ENCODE measurements at regions of chr19 and their contacts with region 1.

Region 1: DNA sequence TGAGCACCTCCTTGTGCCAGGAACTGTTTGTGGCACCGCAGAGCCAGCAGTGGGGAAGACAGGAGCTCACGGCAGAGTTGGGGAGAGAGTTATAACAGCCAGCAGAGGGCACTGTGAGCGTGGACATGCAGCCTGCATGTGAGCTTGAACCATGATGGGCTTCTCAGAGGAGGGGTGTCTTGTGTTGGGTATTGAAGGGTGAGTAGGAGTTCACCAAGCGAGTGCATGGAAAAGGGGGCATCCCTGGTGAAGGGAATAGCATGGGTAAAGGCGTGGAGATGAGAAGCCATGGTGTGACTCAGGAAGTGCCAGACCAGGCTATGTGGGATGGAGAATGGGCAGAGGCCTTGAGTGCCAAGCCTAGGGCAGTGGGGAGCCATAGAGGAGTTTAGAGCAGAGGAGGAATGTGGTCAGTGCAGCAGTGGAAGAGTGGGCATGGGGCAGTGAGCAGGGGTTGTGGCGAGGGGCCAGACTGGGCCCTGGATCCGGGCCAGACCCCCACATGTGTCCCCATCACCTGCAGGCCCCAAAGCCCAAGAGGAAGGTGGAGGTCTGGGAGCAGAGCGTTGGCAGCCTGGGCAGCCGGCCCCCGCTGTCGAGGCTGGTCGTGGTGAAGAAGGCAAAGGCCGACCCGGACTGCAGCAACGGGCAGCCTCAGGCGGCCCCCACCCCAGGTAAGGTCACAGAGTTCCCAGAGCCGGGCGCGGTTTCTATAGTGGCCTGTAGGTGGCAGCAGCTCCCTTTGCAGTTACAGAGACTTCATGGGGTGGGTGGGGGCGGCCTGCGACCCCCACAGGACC is 11.8 kb upstream of the SHD start:
- DNase-seq: peak; percentile 75
- H3K4me3 ChIP-seq: no peak overlapping the region
- H3K27ac ChIP-seq: no peak overlapping the region
- H3K4me1 ChIP-seq: no peaks in the 10 kb centered on the region
- CTCF ChIP-seq: peak; percentile 78

Region 2: GRCh38 chr19:4295972-4296771 is 28.9 kb after region 1 on chr19:
- CTCF ChIA-PET with region 1: interaction called, 10 read pairs
- POLR2A ChIA-PET with region 1: no interaction called
- intact Hi-C with region 1: no loop called
- DNase-seq: peak; percentile 50
- H3K4me3 ChIP-seq: no peak overlapping the region
- H3K27ac ChIP-seq: no peak overlapping the region
- H3K4me1 ChIP-seq: no peaks in the 10 kb centered on the region
- CTCF ChIP-seq: no peak

Region 3: DNA sequence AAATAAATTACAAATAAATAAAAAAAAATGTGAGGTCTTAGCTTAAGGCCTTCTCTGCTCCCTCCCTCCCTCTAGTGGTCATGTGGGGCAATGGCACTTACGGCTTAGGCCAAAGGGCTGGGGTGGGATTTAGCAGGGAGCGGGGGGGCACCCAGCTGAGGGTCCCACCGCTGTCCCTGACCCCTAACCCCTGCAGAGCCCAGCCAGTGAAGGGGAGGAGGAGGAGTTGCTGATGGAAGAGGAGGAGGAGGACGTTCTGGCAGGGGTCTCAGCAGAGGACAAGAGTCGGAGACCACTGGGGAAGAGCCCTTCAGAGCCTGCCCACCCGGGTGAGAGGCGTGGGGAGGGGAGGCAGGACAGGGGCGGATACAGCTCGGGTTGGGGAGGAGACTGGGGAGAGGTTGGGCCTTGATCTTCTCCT is 85.4 kb after region 1 on chr19:
- CTCF ChIA-PET with region 1: interaction called, 8 read pairs
- POLR2A ChIA-PET with region 1: interaction called, 3 read pairs
- intact Hi-C with region 1: loop called (anchors 1 kb)
- DNase-seq: peak; percentile 65
- H3K4me3 ChIP-seq: no peak overlapping the region
- H3K27ac ChIP-seq: no peak overlapping the region
- H3K4me1 ChIP-seq: no peaks in the 10 kb centered on the region
- CTCF ChIP-seq: peak; percentile 84